Lower leg skin (tissue), 4 donors: ENCODE measurements at regions of chr5 and their contacts with region 1.

Region 1: DNA sequence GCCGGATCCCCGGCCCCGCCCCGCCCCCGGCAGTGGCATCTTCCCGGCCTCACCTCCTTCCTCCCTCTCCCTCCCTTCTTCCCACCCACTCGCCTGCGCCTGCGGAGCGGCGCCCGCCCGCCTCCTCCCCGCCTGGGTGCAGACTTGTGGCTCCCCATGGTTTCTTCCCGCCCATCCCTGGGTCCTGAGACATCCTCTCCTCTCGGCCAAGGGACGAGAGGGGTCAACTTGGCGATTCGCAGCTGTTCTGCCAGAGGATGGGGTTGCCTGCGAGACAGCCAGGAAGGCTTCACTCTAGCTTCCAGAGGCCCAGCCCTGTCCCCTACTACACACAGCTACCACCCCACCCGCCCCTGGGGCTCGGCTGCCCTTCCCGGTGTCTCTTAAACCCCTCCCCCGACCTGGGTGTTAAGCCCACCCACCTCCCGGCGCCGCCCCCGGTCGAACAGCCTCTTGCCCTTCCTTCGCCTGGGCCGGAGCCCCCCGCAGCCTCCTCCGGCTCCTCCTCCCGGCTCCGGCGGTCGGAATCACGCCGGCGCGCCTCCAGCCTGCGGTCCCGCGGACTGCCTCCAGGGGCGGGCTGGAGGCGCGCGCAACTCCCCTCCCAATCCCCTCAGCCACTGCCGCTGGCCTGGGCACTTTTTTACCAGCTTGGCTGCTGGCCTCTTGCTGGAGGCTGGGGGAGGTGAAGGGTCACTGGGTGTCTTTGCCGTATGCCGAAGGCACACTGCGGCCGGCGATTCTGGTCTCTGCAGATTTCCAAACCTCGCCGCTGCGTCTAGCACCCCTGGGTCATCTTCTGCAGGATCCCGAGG is 1.9 kb downstream of the JADE2 start:
- DNase-seq: peak; percentile 83 to 98
- H3K4me3 ChIP-seq: peak overlapping the region; percentile 85
- CTCF ChIP-seq: peak in 1 of 3 donors; percentile 49
- POLR2A ChIP-seq: peak in 1 of 2 donors; percentile 3

Region 2: DNA sequence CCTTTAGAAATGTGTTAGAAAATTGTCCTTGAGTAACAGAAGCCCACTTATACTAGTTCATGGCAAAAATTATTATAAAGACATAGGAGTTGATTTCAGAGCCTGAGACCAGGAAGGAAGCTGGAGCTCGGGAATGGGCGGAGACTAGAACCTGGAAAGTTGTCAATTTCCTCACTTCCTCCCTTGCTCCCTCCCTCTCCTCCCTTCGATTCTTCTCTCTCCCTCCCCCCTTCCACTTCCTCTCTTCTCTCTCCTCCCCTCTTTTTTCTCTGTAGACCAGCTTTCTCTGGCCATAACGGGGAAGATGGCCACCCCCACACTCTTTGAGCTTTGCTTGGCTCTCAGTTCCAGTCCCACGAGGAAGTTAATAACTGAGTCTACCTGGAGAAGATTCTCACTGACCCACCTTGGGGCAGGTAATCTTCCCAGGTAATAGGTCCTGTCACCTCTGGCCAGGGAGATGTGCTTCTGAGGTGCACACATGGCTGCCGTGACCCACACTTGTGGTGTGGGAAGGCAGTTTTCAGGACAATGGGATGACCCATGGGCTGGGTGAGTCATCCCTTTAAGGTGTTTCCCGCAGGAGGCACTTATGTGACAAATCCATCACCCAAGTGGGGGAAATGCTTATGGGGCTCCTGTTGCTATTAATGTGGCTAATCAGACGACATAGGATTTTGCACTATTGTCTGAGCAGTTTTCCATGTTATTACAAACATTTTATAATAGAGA is 1396.8 kb before region 1 on chr5:
- intact Hi-C with region 1: no loop called
- DNase-seq: peak in 1 of 2 donors; percentile 39
- H3K4me3 ChIP-seq: no peak overlapping the region
- CTCF ChIP-seq: no peak
- POLR2A ChIP-seq: no peak

Region 3: GRCh38 chr5:134411546-134412266 is 115.6 kb before region 1 on chr5 and contains the start of gene CDKN2AIPNL:
- intact Hi-C with region 1: loop called (anchors 10 kb)
- DNase-seq: peak; percentile 82 to 97
- H3K4me3 ChIP-seq: peak within 1 kb of the TSS; percentile 69
- CTCF ChIP-seq: peak in 1 of 3 donors; percentile 54
- POLR2A ChIP-seq: no peak
- total RNA-seq, gene CDKN2AIPNL: 12.3 to 18.9 (median 15.1) TPM